ENCODE measurements at regions of chr1 and their contacts with region 1.

Region 1: DNA sequence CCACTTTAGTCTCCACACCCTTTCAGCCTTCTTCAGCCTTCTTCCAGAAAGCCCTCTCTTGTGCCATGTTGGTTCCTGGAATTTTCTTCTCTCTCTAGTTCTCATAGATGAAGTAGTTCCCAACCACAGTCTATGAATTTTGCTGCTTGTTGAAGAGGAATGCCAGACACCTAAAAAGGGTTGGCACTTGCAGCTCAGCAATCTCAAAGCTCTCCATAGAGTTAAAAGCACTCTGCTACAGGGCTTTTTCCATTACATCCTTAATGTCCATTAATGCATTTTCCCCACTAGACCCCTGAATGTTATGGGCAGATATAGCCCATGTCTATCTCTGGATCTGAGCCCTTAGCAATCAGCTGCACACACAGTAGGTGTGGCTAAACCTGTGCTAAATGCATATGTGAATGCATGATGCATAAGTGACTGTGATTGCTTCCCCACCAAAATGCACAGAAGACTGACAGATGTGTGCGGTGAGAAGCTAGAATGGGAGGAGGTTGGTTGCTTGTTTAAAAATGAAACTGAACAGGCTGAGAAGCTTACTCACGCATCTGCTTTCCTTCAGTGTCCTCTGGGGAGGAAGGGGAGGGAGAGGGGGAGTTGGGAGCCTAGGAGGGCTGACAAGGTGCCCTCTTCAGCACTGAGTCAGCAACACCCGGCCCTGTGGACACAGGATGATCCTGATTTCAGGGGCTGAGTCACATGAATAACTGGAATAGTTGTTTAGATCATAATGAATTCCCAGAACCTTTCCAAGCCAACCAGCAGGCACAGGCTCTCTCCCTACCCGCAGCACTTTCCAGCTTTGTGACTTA is 146.1 kb upstream of the FGGY start:
- DNase-seq: peak; percentile 96
- H3K4me3 Mint-ChIP-seq: peak overlapping the region; percentile 65
- H3K27ac Mint-ChIP-seq: peak overlapping the region; percentile 86
- H3K4me1 Mint-ChIP-seq: peaks cover 22% of the 10 kb centered on the region
- H3K27me3 Mint-ChIP-seq: no peaks in the 10 kb centered on the region
- CTCF ChIP-seq: no peak

Region 2: DNA sequence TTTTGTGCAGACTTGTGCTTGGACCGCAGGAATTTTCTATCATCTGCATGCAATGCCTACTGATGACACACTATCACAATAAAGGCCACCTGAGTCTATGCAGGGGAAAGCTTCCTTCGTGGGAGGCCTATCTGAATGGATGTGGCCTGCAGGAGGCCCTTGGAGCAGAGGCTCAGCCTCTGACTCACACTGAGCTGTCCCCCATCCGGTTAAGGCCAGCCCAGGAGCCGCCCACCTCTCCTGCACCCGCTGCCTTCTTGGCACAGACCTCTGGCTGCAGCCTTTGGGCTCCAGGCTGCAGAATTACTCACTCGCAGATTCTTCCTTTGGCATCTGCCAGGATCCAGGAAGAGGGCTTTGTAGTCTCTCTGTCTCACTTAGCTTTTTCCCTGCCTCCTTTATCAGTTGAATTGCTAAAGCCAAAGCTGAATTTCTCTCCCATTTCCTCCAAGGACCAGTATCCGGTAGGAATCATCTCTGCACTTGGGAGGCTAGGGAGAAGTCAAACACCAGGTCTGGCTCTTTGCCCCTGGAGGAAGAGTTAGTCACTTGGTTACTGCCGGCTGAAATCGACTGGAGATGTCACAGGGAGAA is 301.9 kb before region 1 on chr1:
- CTCF ChIA-PET with region 1: no interaction called
- POLR2A ChIA-PET with region 1: no interaction called
- intact Hi-C with region 1: loop called (anchors 1 kb)
- DNase-seq: peak; percentile 99
- H3K4me3 Mint-ChIP-seq: peak overlapping the region; percentile 33
- H3K27ac Mint-ChIP-seq: no peak overlapping the region
- H3K4me1 Mint-ChIP-seq: peaks cover 23% of the 10 kb centered on the region
- H3K27me3 Mint-ChIP-seq: no peaks in the 10 kb centered on the region
- CTCF ChIP-seq: no peak

Region 3: DNA sequence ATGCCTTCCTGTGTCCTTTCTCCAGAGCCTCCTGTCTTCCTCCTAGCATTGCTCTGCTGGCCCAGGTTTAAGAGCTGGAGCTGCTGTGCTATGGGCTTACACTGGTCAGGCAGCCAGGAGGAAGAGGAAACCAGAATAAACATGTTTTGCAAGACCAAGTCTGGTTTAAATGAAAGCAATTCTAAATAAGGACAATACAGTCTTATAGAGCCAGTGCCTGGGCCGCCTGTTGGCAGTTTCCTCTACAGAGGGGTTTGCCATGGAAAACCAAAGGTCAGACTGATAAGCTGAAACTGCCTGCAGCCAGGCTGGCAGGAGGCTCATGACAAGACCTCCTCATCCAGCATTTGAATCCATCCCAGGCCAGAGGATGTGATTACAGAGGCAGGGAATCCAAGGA is 53.2 kb after region 1 on chr1:
- CTCF ChIA-PET with region 1: no interaction called
- POLR2A ChIA-PET with region 1: no interaction called
- intact Hi-C with region 1: no loop called
- DNase-seq: no peak
- H3K4me3 Mint-ChIP-seq: no peak overlapping the region
- H3K27ac Mint-ChIP-seq: no peak overlapping the region
- H3K4me1 Mint-ChIP-seq: no peaks in the 10 kb centered on the region
- H3K27me3 Mint-ChIP-seq: no peaks in the 10 kb centered on the region
- CTCF ChIP-seq: no peak